ENCODE measurements at regions of chrX and their contacts with region 1.

Region 1: DNA sequence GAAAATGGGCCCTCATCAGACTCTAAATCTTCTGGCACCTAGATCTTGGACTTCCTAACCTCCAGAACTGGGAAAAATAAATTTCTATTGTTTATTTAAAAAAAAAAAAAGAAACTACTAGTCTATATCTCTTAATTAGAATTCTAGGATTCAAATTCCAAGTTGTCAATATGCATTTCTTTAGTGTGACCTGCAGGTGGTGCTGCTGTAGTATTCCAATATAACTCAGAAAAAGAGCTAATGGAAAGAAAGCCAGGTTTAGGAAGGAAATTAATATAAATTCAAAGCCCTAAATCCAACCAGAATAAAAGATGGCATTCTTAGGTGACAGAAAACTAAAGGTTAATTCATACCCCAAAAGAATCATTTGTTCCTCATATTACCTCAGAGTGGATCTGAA is 80.0 kb upstream of the NALF2 start:
- DNase-seq: no peak

Region 2: DNA sequence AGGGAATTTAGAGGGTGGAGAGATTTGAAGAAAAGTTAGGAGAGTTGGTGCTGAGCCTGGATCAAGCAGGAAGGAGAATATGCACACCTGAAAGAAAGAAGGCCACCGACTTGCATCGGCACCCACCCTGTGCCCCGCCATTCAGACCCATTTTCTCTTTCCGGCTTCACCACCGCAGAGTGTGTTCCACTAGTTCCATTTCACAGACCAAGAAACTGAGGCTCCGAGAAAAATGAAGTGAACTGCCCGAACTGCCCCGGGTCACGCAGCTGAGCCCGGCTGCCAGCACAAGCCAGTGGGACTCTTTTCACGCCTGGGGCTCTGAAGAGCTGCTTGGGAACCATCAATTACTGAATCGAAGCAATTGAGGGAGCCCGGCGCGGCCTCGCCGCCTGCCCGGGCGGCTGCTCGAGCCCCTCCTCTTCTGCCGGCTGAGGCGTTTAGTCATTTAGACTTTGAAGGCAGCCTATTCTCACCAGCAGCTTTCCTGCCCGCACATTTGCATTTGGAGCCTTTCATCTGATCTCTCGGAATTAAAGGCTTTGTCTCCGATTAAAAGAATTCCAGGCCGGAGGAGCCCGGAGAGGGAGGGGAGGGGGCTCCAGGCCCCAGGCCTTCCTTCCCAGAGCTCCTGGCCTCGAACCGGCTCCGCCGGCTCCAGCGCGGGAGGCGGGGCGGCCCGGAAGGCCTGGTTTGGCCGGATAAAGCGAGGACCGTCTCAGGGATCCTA is 118.7 kb before region 1 on chrX:
- CTCF ChIA-PET with region 1: no interaction called
- POLR2A ChIA-PET with region 1: no interaction called
- DNase-seq: no peak

Region 3: GRCh38 chrX:69323786-69324720 is 100.1 kb before region 1 on chrX:
- CTCF ChIA-PET with region 1: no interaction called
- POLR2A ChIA-PET with region 1: no interaction called
- DNase-seq: peak; percentile 19

Region 4: GRCh38 chrX:69412661-69413060 is 11.5 kb before region 1 on chrX:
- CTCF ChIA-PET with region 1: interaction called, 15 read pairs
- POLR2A ChIA-PET with region 1: no interaction called
- DNase-seq: no peak

Region 5: DNA sequence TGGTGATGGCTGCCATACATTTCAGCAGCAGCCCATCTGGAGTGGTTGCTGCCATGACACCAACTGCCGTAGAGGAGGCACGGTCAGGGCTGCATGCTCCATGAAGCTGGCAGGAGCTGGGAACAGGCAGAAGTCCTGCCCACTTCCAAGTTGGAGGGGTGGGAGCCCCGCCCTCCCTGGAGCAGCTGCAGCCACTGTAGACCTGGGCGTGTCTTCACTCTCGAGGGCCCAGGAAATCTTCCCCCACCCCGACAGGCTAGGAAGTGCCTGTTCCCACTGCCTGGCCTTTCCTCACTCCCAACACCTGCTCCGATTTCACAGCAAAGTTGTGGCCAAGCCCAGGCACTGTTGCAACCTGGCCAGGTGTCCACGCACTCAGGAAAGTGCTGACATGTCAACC is 122.3 kb after region 1 on chrX:
- CTCF ChIA-PET with region 1: no interaction called
- POLR2A ChIA-PET with region 1: no interaction called
- DNase-seq: no peak

Region 6: GRCh38 chrX:69670001-69670555 is 245.9 kb after region 1 on chrX:
- CTCF ChIA-PET with region 1: no interaction called
- POLR2A ChIA-PET with region 1: no interaction called
- DNase-seq: no peak

Measured in HEK293T (cell line).